Natural killer cell (primary cell): ENCODE measurements at regions of chr2 and their contacts with region 1.

Region 1: DNA sequence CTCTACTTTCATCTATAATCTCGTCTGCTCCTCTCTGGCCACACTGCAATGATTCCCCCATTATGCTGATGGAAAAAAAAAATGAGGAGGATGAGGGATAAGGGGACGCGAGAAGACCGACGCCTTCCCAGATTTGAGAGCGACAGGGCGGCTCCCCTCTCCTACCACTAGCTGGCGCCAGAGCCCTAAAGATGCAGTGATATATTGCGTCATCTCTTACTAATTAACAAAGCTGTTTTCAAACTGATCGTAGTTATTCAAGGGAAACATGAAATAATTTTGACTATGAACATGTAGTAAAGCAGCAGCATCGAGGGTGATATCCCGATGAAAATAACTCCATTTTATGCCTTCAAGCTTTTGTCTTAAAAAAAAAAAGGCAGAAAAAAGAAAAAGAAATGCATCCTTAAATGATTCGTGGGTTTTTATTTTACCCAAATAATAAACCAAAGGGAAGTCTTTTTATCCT is 48.0 kb upstream of the HNRNPA3 start:
- DNase-seq: peak; percentile 71 to 89
- ATAC-seq: peak; percentile 79 to 81 (median 80)
- H3K4me3 ChIP-seq: peak overlapping the region; percentile 44
- H3K4me3 Mint-ChIP-seq: no peak overlapping the region
- H3K27ac ChIP-seq: peak overlapping the region; percentile 24
- H3K27ac Mint-ChIP-seq: no peak overlapping the region
- H3K4me1 ChIP-seq: peaks cover 12% of the 10 kb centered on the region
- H3K4me1 Mint-ChIP-seq: peaks cover 13 to 18% of the 10 kb centered on the region in 2 donors
- H3K27me3 ChIP-seq: no peaks in the 10 kb centered on the region
- H3K27me3 Mint-ChIP-seq: peaks cover 0 to 2% of the 10 kb centered on the region in 2 donors
- CTCF ChIP-seq: peak; percentile 100

Region 2: GRCh38 chr2:176126929-176127773 is 1037.5 kb before region 1 on chr2:
- intact Hi-C with region 1: loop called (anchors 5 kb)
- DNase-seq: peak; percentile 57 to 87
- ATAC-seq: peak in 1 of 3 donors; percentile 32
- H3K4me3 ChIP-seq: no peak overlapping the region
- H3K4me3 Mint-ChIP-seq: peak overlapping the region; percentile 40
- H3K27ac ChIP-seq: no peak overlapping the region
- H3K27ac Mint-ChIP-seq: peak overlapping the region in 1 of 2 donors; percentile 18
- H3K4me1 ChIP-seq: peaks cover 26% of the 10 kb centered on the region
- H3K4me1 Mint-ChIP-seq: peaks cover 22 to 27% of the 10 kb centered on the region in 2 donors
- H3K27me3 ChIP-seq: peaks cover 82% of the 10 kb centered on the region
- H3K27me3 Mint-ChIP-seq: peaks cover 69 to 75% of the 10 kb centered on the region in 2 donors
- CTCF ChIP-seq: peak; percentile 93

Region 3: GRCh38 chr2:177263451-177264208 is 99.0 kb after region 1 on chr2:
- intact Hi-C with region 1: loop called (anchors 1 kb)
- DNase-seq: peak; percentile 98
- ATAC-seq: peak; percentile 56 to 84 (median 61)
- H3K4me3 ChIP-seq: peak overlapping the region; percentile 97
- H3K4me3 Mint-ChIP-seq: peak overlapping the region; percentile 97
- H3K27ac ChIP-seq: peak overlapping the region; percentile 100
- H3K27ac Mint-ChIP-seq: peak overlapping the region; percentile 97 to 99
- H3K4me1 ChIP-seq: peaks cover 18% of the 10 kb centered on the region
- H3K4me1 Mint-ChIP-seq: peaks cover 47 to 60% of the 10 kb centered on the region in 2 donors
- H3K27me3 ChIP-seq: no peaks in the 10 kb centered on the region
- H3K27me3 Mint-ChIP-seq: no peaks in the 10 kb centered on the region
- CTCF ChIP-seq: peak; percentile 79

Region 4: DNA sequence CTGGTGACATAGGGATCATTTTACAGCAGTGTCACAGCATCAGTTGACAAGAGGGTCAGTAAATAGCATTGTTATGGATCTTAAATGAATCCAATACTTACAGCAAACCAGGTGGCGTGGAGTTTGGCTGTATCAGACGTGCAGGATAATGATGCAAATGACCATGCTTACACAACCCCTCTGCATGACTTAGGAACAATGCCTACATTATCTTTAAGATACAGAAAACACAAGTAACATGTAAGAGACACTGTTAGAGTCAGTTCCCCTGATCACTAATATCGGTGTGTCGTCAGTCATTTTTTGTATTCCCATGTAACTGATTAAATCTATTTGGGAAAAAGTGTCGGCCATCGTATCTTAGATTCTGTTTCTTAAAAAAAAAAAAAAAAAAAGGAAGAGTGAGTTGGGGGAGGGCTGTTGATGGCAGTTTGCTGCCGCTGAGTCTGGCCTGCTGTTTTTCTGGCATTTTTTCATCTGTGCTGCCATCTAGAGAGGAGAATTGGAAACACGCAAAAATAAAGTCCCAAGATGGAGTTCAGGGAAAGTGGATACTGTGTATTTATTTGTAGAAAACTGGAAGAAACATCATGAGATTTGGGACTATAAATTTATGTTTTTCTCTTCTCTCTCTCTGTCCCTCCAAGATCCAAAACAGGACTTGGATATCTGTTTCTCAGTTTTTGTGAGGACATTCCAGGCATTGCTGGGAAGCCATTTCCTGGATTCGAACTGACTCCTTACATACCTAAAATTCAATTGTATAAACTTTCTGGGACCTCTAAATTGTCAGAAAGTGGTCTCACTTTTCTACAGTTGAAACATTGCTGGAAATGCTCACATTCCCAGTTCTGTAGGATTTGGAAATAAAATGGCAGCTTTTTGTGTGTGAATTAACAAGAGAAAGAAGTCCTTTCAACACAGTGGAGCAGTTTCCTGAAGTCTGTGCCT is 167.7 kb after region 1 on chr2:
- intact Hi-C with region 1: loop called (anchors 1 kb)
- DNase-seq: peak in 1 of 2 donors; percentile 81
- ATAC-seq: peak; percentile 85 to 89 (median 89)
- H3K4me3 ChIP-seq: no peak overlapping the region
- H3K4me3 Mint-ChIP-seq: no peak overlapping the region
- H3K27ac ChIP-seq: no peak overlapping the region
- H3K27ac Mint-ChIP-seq: peak overlapping the region in 1 of 2 donors; percentile 62
- H3K4me1 ChIP-seq: no peaks in the 10 kb centered on the region
- H3K4me1 Mint-ChIP-seq: peaks cover 0 to 8% of the 10 kb centered on the region in 2 donors
- H3K27me3 ChIP-seq: no peaks in the 10 kb centered on the region
- H3K27me3 Mint-ChIP-seq: no peaks in the 10 kb centered on the region
- CTCF ChIP-seq: peak; percentile 70

Region 5: GRCh38 chr2:177552422-177553175 is 388.0 kb after region 1 on chr2:
- intact Hi-C with region 1: loop called (anchors 10 kb)
- DNase-seq: peak; percentile 91 to 97
- ATAC-seq: peak; percentile 90 to 95 (median 92)
- H3K4me3 ChIP-seq: peak overlapping the region; percentile 74
- H3K4me3 Mint-ChIP-seq: peak overlapping the region; percentile 98
- H3K27ac ChIP-seq: peak overlapping the region; percentile 96
- H3K27ac Mint-ChIP-seq: peak overlapping the region; percentile 98 to 100
- H3K4me1 ChIP-seq: peaks cover 13% of the 10 kb centered on the region
- H3K4me1 Mint-ChIP-seq: peaks cover 12 to 13% of the 10 kb centered on the region in 2 donors
- H3K27me3 ChIP-seq: no peaks in the 10 kb centered on the region
- H3K27me3 Mint-ChIP-seq: peaks cover 4 to 8% of the 10 kb centered on the region in 2 donors
- CTCF ChIP-seq: no peak

Region 6: GRCh38 chr2:177724398-177725287 is 560.0 kb after region 1 on chr2:
- intact Hi-C with region 1: loop called (anchors 2 kb)
- DNase-seq: peak in 1 of 2 donors; percentile 63
- ATAC-seq: peak; percentile 34 to 63 (median 54)
- H3K4me3 ChIP-seq: no peak overlapping the region
- H3K4me3 Mint-ChIP-seq: no peak overlapping the region
- H3K27ac ChIP-seq: no peak overlapping the region
- H3K27ac Mint-ChIP-seq: no peak overlapping the region
- H3K4me1 ChIP-seq: no peaks in the 10 kb centered on the region
- H3K4me1 Mint-ChIP-seq: no peaks in the 10 kb centered on the region
- H3K27me3 ChIP-seq: peaks cover 4% of the 10 kb centered on the region
- H3K27me3 Mint-ChIP-seq: peaks cover 22 to 41% of the 10 kb centered on the region in 2 donors
- CTCF ChIP-seq: peak; percentile 62